ENCODE measurements at regions of chr2 and their contacts with region 1.

Region 1: DNA sequence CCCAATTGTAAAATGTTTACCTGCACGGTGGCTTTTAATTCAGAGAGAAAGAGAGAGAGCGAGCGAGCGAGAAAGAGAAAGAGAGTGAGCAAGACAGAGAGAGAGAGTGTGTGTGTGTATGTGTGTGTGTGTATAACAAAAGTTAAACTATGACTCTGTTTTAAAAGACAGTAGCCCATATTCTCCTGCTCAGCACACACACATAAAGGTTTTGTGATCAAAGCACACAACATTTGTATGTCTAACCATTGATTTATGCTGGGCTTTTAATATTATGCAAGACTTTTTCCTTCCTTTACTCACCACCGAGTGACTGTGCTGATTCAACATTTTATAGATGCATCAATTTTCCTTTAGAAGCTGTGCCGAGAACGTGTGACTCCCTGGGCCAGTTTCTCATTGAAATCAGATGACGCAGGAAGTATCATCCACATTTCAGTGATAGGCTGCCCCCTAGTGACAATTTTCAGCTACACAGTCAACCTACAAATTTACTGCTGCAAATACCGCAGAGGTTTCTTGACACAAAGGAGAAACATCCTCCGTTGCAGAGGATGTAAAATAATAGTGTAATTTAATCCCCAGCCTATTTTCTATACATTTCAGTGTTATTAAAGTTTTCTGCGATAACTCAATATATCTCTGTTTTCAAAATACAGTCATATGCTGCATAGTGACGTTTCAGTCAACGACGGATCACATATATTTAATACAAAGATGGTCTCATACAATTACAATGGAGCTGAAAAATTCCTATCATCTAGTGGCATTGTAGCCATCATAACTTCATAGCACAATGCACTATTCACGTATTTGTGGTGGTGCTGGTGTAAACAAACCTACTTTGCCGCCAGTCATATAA is 165.9 kb upstream of the TANK start:
- DNase-seq: peak; percentile 47
- ATAC-seq: peak; percentile 94

Region 2: DNA sequence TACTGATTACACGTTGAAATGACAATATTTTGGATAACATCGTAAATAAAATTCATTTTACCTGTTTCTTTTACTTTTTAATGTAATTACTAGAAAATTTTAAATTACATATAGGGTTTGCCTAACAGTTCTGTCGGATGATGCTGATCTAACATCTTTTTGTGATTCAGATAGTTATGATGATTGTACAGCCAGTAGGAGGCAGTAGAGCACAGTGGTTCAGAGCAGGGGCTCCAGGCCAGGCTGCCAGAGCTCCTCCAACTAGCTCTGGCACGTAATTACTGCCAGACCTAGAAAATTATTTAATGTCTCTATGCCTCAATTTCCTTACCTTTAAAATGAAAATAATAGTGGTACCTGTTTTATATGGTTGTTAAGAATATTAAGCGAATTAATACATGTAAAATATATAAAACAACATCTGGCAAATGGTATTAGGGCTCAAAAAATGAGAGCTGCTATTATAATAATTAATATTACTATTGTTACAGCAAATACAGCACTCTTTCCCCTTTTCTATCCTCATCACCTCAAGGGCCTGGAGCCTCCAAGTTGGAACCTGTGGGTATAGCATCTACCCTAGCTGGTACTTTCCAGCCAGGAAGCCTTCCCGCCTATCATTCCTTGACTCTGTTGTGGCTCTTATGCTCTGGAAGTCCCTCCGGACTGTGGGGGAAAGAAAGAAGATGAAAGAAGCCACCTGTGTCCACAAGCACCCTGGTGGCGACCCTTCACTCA is 884.3 kb before region 1 on chr2:
- intact Hi-C with region 1: loop called (anchors 5 kb)
- DNase-seq: peak; percentile 73
- ATAC-seq: peak; percentile 93

Region 3: GRCh38 chr2:160928854-160929620 is 65.3 kb before region 1 on chr2:
- intact Hi-C with region 1: no loop called
- DNase-seq: no peak
- ATAC-seq: peak; percentile 57

Region 4: GRCh38 chr2:160952464-160953254 is 41.7 kb before region 1 on chr2:
- intact Hi-C with region 1: no loop called
- DNase-seq: peak; percentile 76
- ATAC-seq: peak; percentile 93